ENCODE measurements at regions of chr19 and their contacts with region 1.

Region 1: GRCh38 chr19:13861732-13862531 is 15.0 kb upstream of the NANOS3 start:
- DNase-seq: peak; percentile 95 to 97
- ATAC-seq: peak; percentile 96
- H3K4me3 ChIP-seq: peak overlapping the region; percentile 18 to 22
- H3K27ac ChIP-seq: peak overlapping the region; percentile 53 to 76
- H3K4me1 ChIP-seq: no peaks in the 10 kb centered on the region
- H3K27me3 ChIP-seq: no peaks in the 10 kb centered on the region

Region 2: DNA sequence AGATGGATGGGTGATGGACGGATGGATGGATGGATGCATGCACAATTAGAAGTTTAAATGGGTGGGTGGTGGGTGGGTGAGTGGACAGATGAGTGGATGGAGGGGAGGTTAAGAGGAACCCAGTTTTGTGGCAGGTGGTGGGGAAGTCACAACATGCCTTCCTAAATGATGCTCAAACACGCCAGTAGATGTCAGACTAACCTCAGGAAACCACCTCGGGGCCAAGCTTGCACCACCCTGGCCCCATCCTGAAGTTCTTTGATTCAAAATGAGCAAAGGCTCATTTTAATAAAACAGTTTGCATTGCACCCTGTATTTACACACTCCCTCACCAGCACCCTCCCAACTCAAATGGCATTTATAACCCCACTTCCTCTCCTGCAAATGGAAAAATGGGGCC is 264.3 kb before region 1 on chr19:
- intact Hi-C with region 1: loop called (anchors 5 kb)
- DNase-seq: peak; percentile 61 to 67
- ATAC-seq: peak; percentile 69
- H3K4me3 ChIP-seq: no peak overlapping the region
- H3K27ac ChIP-seq: no peak overlapping the region
- H3K4me1 ChIP-seq: no peaks in the 10 kb centered on the region
- H3K27me3 ChIP-seq: no peaks in the 10 kb centered on the region

Region 3: DNA sequence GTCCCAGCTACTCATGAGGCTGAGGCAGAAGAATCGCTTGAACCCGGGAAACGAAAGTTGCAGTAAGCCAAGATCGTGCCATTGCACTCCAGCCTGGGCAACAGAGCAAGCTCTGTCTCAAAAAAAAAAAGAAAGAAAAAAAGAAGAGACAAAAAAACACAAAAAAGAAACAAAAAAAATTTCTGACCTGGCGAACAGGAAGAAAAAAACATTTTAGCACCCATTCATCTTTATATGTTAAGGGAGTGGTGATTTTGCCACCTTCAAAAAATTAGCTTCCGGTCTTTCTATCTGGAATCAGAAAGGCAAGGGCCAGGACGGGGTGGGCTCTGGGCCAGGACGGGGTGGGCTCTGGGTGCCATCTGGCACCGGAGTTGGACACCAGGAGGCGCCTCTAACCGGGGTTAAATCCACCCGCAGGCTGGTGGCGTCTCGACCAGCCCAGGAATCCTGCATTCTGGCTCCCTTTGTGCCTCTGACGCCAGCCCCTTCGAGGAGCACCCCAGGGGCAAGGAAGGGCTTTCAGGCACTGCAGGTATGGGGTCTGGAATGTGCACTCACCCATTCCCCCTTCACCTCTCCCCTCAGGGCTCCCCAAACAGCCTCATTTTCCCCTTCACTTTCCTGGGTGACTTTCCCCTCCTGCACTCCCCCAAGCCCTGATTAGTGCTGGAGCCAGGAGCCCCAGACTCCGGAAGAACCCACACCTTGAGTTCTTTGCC is 77.0 kb before region 1 on chr19:
- intact Hi-C with region 1: loop called (anchors 2 kb)
- DNase-seq: peak; percentile 90 to 95
- ATAC-seq: peak; percentile 66
- H3K4me3 ChIP-seq: no peak overlapping the region
- H3K27ac ChIP-seq: peak overlapping the region in 1 of 2 donors; percentile 90
- H3K4me1 ChIP-seq: no peaks in the 10 kb centered on the region
- H3K27me3 ChIP-seq: no peaks in the 10 kb centered on the region

Region 4: DNA sequence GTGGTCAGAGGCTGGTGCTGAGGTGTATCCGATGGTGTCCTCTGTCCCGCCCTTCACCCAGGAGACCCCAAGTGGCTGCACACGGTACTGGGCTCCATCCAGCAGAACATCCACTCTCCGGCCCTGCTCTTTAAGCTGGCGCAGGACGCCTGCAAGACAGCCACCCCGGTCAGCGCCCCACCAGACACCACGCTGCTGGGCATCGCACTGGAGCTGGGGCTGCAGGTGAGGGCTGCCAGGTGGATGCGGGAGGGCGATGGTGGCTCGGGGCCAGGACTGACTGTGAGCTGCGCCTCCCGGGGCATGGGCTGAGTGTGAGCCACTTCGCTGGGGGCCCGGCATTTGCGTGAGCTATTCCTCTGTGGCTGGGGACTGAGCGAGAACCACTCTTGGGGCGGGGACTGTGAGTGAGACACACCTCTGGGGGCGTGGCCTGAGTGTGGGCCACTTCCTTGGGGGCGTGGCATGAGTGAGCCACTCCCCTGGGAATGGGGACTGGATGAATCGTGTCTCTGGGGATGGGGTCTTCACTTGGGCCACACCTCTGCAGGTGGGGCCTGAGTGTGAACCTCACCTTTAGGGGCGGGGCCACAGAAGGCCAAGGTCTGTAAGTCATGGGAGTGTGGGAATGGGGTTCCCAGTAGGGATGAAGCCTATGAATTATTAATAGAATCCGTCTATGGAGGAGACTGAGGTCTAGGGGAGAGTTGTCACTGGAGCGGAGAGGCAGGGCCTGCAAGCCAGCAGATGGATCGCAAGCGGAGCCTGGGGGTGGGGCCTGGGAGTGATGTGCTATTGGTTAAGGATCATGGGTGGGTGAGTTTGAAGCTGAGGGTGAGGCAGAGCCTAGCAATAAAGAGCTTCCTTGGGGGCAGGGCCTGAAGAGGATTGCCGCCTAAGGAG is 36.2 kb before region 1 on chr19:
- intact Hi-C with region 1: loop called (anchors 5 kb)
- DNase-seq: peak in 1 of 2 donors; percentile 84
- ATAC-seq: no peak
- H3K4me3 ChIP-seq: no peak overlapping the region
- H3K27ac ChIP-seq: no peak overlapping the region
- H3K4me1 ChIP-seq: no peaks in the 10 kb centered on the region
- H3K27me3 ChIP-seq: no peaks in the 10 kb centered on the region